ENCODE measurements at regions of chr12 and their contacts with region 1.

Region 1: GRCh38 chr12:126982707-126983106 is 1284.3 kb upstream of the TMEM132C start:
- DNase-seq: no peak
- ATAC-seq: no peak

Region 2: DNA sequence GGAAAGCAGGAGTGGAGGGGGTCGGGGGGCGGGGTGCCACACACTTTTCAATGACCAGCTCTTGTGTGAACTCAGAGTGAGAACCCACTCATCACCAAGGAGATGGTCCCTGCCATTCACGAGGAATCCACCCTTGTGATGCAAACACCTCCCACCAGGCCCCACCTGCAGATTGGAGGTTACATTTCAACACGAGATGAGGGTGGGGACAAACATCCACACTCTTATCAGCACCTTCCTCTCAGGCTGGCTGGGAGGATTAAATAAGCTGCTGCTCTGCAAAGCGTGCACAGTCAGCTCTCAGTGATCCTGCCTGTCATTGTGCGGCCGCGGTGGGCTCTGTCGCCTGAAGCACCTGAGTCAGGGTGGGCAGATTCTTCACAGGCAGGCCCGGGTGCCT is 1877.7 kb before region 1 on chr12:
- intact Hi-C with region 1: loop called (anchors 5 kb)
- DNase-seq: no peak
- ATAC-seq: no peak

Region 3: DNA sequence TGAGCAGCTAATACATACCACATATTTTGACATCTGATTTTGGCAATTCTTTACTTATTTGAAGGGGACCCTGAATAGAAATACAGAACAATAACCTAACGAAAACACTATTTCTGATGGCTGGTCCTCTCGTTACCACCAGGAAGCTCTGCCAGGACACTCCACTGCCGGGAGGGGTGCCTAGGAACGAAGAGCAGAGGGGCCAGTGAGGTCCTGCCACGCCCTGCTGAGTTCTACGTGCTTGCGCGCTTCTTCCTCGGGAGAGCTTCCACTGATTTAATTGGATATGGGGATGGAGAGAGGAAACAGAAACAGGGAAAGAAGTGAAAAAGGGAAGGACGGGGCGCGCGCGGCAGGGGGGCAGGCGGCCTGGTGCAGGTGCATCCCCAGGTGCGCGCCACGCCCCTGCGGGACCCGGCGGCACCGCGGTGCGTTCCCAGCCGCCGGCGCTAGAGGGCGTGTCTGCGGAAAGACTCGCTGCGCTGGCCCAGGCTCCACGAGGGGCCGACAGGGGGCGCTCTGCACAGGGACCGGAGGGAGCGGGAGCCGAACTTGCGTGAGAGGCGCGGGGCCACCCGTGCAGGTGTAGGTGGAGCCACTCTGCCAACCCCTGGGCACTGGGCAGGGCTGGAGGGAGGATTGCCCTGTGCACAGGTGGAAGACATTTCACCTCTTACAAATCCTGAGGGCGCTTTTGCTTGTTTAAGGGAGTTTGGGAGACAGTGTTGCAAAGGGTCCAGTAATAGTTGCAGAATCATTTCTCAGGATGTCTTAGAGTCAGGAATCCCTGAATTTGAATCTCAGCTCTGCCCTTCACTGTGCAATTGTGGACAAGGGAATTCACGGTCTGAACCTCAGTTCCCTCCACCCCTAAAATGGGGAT is 297.9 kb after region 1 on chr12:
- intact Hi-C with region 1: no loop called
- DNase-seq: peak; percentile 66
- ATAC-seq: no peak

Region 4: DNA sequence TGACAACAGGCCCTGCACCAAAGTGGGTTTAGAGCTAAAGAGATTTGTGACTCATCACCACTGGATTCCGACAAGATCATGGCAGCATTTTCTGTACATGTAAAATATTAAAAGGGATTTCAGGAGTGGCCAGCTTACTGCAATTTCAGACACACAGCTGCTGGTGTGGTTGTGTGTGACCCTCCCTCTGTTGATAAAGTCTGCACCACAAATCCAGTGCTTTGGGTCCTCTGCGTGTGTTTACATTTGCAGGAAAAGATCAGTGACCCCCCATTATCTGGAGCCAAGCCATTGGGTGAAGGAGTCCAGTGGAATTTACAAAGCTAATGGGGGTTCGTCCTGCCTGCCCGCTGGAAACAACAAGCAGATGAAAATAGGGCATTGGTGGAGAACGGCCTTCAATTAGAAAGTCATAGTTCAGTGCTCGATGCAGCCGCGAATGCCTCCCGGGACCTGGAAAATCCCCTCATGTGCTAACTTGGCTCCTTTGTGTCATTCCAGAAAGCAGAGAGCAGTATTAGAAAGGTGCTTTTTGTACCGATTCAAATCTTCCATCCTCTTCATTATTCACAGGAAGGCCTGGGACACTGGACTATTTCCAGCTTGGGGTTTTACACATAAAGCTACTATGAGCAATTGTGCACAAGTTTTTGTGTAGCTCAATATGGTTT is 1095.7 kb after region 1 on chr12:
- intact Hi-C with region 1: no loop called
- DNase-seq: no peak
- ATAC-seq: peak; percentile 15

Region 5: DNA sequence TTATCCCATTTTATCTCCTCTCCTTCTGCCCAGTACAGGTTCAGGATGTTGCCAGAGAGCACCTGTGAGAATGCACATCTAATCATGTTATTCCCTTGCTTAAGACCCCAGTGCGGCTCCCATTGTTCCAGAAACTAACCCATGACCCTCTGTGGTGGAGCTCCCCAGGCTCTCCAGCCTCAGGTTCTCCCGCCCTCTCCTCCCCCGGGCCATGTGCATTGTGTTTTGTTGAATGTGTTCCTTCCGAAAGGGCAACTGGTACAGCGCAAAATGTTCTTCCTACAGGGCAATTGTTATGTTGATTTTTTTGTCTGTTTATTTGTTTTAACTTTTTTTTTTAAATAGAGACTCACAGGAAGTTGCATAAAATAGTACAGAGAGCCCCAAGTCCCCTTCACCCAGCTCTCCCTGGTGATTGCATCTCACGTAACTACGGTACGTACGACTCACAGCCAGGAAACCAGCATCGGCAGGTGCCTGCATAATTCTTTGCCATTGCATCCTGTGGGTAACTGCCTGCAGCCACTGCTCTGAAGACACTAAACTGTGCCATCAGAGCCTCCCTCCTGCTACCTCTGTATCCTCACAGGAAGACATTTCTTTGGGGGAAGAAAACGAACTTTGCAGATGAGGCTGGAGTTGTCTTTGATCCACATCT is 1315.5 kb after region 1 on chr12:
- intact Hi-C with region 1: no loop called
- DNase-seq: no peak
- ATAC-seq: no peak

Measured in sciatic nerve (tissue), 2 donors.